OCI-LY7 (cell line): ENCODE measurements at regions of chr6 and their contacts with region 1.

Region 1: DNA sequence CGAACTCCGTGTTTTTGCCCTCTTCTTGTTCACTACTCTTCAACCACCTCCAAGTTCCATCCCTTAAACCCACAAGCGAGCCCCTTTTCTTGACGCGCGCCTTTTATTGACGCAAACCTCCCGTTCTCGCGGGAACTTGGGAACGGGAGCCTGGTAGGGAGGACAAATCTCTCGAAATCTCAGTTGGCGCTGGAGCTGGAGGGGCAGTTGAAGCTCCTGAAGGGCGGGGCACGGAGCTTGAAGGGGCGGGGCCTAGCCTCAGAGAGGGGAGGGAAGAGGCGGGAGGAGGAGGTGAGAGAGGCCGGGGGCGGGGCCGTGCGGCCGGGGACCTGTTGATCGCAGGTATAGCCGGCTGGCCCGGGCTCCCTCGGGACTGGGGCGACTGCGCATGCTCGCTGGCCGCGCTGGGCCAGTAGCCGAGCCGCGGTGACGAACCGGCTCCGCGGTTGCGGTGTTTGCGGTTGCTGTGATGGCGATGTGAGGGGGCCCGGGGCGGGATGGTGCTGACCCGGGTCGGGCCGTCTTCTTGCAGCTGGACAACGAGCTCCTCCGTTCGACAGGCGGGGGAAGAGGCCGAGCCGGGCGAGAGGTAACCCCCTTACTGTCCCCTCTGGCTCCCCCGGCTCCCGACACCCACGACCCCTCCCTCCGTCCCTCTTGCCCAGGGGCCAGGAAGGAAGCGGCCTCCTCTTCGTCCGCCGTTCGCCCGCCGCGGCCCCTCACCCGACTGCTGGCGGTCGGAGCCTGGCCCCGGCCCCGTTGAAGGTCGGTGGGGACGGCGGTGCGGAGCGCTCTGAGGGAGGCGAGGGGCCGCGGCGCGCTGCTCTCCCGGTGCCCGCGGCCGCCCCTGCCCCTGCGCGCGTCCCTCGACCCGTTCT is at the start of gene FAM135A:
- DNase-seq: peak; percentile 98
- H3K4me3 ChIP-seq: peak within 1 kb of the TSS; percentile 75
- H3K27ac ChIP-seq: peak within 1 kb of the TSS; percentile 64
- H3K4me1 ChIP-seq: peaks cover 18% of the 10 kb centered on the region
- CTCF ChIP-seq: no peak
- total RNA-seq, gene FAM135A: 46.1 and 66.2 TPM in 2 replicates

Region 2: GRCh38 chr6:69881322-69882151 is 531.8 kb before region 1 on chr6:
- CTCF ChIA-PET with region 1: no interaction called
- POLR2A ChIA-PET with region 1: no interaction called
- intact Hi-C with region 1: loop called (anchors 5 kb)
- DNase-seq: peak; percentile 69
- H3K4me3 ChIP-seq: peak overlapping the region; percentile 58
- H3K27ac ChIP-seq: peak overlapping the region; percentile 31
- H3K4me1 ChIP-seq: peaks cover 25% of the 10 kb centered on the region
- CTCF ChIP-seq: no peak

Region 3: GRCh38 chr6:70299456-70299855 is 113.9 kb before region 1 on chr6:
- CTCF ChIA-PET with region 1: no interaction called
- POLR2A ChIA-PET with region 1: no interaction called
- intact Hi-C with region 1: no loop called
- DNase-seq: no peak
- H3K4me3 ChIP-seq: no peak overlapping the region
- H3K27ac ChIP-seq: no peak overlapping the region
- H3K4me1 ChIP-seq: no peaks in the 10 kb centered on the region
- CTCF ChIP-seq: no peak

Region 4: DNA sequence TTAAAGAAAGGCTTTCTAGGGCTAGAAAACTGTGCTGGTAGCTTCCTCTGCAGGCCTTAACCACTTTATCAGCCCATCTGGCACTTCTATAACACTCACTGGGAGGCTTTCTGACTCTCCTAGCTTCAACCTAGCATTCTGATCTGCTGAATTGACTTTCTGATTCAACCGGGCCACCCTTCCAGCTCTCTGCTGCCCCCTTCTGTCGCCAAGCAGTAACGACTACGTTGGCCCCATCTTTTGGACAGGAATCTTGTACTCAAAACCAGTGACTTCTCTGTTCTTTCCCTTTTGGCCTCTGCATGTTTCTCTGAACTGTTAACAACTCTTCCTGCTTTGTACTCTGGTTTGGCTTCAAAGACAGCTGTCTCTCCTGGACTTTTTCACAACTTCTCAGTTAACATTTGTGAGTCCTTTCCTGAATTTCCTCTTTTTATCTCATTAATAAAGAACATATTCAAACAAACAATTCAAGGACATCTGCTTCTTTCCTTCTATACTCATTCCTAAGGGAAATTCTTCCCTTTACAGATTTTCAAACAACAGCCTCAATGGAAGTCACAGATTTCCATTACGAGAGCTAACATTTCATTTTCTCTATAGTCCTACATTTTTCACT is 43.9 kb before region 1 on chr6:
- CTCF ChIA-PET with region 1: interaction called, 10 read pairs
- POLR2A ChIA-PET with region 1: interaction called, 4 read pairs
- intact Hi-C with region 1: no loop called
- DNase-seq: peak; percentile 58
- H3K4me3 ChIP-seq: no peak overlapping the region
- H3K27ac ChIP-seq: no peak overlapping the region
- H3K4me1 ChIP-seq: no peaks in the 10 kb centered on the region
- CTCF ChIP-seq: peak; percentile 82

Region 5: DNA sequence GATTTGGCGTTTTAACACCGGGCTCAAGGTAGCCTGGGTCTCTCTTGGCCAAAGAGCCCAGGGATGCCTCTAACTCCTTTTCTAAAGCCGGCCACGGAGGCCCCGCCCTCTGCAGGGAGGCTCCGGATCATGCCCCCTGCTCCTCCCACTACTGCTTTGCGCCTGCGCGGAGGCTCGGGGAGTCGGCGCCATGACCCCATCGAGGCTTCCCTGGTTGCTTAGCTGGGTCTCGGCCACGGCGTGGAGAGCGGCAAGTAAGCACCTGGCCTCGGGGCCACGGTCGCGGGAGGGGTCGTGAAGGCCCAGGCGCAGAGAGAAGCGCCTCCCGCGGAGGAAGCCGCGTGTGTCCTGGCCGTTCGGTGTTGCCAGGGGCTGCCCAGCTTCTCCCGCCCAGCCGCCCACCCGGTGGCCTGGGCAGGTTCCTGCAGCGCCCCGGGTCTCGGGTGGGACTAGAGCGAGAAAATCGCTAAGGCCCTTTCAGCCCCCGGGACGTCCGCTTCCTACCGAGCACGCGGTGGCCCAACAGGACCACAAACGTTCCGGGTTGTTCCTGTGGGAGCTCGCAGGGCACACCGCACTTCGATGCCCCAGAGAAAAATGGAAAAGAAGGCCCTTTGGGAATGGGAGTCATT is 153.5 kb after region 1 on chr6 and contains the start of gene SDHAF4:
- CTCF ChIA-PET with region 1: no interaction called
- POLR2A ChIA-PET with region 1: interaction called, 3 read pairs
- intact Hi-C with region 1: loop called (anchors 5 kb)
- DNase-seq: peak; percentile 91
- H3K4me3 ChIP-seq: peak within 1 kb of the TSS; percentile 90
- H3K27ac ChIP-seq: peak within 1 kb of the TSS; percentile 44
- H3K4me1 ChIP-seq: peaks cover 5% of the 10 kb centered on the region
- CTCF ChIP-seq: 0 out of 2 replicates have a peak, but pooled peaks have one; percentile 19
- total RNA-seq, gene SDHAF4: 9.6 and 10.4 TPM in 2 replicates

Region 6: GRCh38 chr6:70586114-70586513 is 172.8 kb after region 1 on chr6:
- CTCF ChIA-PET with region 1: no interaction called
- POLR2A ChIA-PET with region 1: no interaction called
- intact Hi-C with region 1: no loop called
- DNase-seq: no peak
- H3K4me3 ChIP-seq: no peak overlapping the region
- H3K27ac ChIP-seq: no peak overlapping the region
- H3K4me1 ChIP-seq: no peaks in the 10 kb centered on the region
- CTCF ChIP-seq: no peak

Region 7: DNA sequence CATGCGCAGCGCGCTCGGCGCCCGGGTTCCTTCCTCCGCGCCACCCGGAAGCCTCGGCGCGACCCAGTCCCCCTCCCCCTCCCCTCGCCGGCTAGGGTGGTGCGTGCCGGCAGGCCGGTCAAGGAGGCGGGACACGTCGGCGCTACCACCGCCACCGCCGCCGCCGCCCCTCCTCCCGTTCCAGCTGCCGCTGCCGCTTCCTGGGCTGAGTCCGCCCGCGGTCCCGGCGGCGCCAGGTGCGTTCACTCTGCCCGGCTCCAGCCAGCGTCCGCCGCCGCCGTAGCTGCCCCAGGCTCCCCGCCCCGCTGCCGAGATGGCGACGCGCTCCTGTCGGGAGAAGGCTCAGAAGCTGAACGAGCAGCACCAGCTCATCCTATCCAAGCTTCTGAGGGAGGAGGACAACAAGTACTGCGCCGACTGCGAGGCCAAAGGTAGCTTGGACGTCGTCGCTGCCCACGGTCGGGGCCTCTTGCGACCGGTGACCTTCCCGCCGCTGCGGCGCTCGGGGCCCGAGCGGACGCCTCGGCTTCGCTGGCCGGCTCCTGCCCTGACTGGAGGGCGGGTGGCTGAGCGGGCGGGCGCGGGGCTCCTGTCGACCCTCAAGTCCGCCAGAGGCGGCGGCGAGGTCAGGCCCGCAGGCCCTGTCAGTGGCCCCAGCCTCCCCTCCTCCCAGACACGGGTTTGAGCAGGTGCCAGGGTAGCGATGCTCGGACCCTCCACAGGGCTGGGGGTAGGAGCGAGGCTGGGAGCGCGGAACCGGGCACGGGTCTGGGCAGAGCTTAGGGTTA is 254.6 kb after region 1 on chr6 and contains the start of gene SMAP1:
- CTCF ChIA-PET with region 1: no interaction called
- POLR2A ChIA-PET with region 1: interaction called, 18 read pairs
- intact Hi-C with region 1: loop called (anchors 2 kb)
- DNase-seq: peak; percentile 93
- H3K4me3 ChIP-seq: peak within 1 kb of the TSS; percentile 91
- H3K27ac ChIP-seq: peak within 1 kb of the TSS; percentile 64
- H3K4me1 ChIP-seq: peaks cover 19% of the 10 kb centered on the region
- CTCF ChIP-seq: no peak
- total RNA-seq, gene SMAP1: 10.9 and 15.1 TPM in 2 replicates

Region 8: GRCh38 chr6:70857387-70858077 is 444.2 kb after region 1 on chr6:
- CTCF ChIA-PET with region 1: interaction called, 3 read pairs
- POLR2A ChIA-PET with region 1: no interaction called
- intact Hi-C with region 1: loop called (anchors 10 kb)
- DNase-seq: peak; percentile 75
- H3K4me3 ChIP-seq: peak overlapping the region; percentile 21
- H3K27ac ChIP-seq: peak overlapping the region; percentile 52
- H3K4me1 ChIP-seq: peaks cover 28% of the 10 kb centered on the region
- CTCF ChIP-seq: no peak